ENCODE measurements at regions of chr2 and their contacts with region 1.

Region 1: GRCh38 chr2:73697606-73698005 is 39.5 kb downstream of the TPRKB start:
- DNase-seq: no peak
- ATAC-seq: no peak
- H3K4me3 ChIP-seq: no peak overlapping the region
- H3K27ac ChIP-seq: no peak overlapping the region
- H3K4me1 ChIP-seq: no peaks in the 10 kb centered on the region
- H3K27me3 ChIP-seq: no peaks in the 10 kb centered on the region
- CTCF ChIP-seq: no peak

Region 2: DNA sequence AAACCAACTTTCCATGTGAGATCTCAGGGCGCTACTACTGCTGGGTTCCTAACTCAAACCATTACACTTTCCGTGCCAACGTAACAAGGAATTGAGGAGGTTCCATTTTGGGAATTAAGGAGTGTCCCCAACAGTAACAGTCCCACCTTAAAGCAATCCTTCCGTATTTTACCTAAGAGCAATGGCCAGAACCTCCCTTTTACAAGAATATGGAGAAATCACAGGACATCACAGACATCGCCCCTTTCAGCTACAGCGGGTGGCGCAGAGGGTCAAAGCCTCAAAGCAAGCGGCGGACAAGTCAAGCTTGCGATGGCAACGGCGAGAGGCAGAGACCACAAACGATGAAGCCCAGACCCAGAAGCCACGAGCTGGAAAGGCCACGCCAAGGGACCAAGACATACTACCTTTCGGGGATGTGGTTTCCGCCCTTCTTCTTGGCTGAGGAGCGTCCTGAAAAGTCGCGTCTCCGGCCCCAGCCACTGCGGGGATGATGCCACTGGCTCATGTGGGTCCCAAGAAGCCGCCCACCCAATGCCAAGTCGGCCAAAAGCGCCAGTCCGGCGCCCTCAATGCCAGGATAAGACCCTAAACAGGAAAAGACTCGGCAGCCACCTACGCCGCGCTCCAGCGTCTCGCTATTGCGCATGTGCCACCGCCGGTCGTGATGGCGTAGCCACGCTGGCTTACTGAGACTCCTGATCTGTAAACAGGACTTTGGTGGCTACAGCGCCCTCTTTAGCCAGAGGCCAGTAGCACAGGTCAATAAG is 82.0 kb after region 1 on chr2 and contains the start of gene DUSP11:
- intact Hi-C with region 1: loop called in 1 of 2 experiments (anchors 10 kb)
- DNase-seq: peak; percentile 95 to 97
- ATAC-seq: peak; percentile 99 to 100 (median 100)
- H3K4me3 ChIP-seq: peak within 1 kb of the TSS; percentile 78
- H3K27ac ChIP-seq: peak within 1 kb of the TSS; percentile 89
- H3K4me1 ChIP-seq: peaks cover 5% of the 10 kb centered on the region
- H3K27me3 ChIP-seq: no peaks in the 10 kb centered on the region
- CTCF ChIP-seq: peak; percentile 87
- total RNA-seq, gene DUSP11: 8.9 to 14.2 (median 10.1) TPM

Measured in psoas muscle (tissue), 8 donors.